CD14-positive monocyte (primary cell): ENCODE measurements at regions of chr3 and their contacts with region 1.

Region 1: DNA sequence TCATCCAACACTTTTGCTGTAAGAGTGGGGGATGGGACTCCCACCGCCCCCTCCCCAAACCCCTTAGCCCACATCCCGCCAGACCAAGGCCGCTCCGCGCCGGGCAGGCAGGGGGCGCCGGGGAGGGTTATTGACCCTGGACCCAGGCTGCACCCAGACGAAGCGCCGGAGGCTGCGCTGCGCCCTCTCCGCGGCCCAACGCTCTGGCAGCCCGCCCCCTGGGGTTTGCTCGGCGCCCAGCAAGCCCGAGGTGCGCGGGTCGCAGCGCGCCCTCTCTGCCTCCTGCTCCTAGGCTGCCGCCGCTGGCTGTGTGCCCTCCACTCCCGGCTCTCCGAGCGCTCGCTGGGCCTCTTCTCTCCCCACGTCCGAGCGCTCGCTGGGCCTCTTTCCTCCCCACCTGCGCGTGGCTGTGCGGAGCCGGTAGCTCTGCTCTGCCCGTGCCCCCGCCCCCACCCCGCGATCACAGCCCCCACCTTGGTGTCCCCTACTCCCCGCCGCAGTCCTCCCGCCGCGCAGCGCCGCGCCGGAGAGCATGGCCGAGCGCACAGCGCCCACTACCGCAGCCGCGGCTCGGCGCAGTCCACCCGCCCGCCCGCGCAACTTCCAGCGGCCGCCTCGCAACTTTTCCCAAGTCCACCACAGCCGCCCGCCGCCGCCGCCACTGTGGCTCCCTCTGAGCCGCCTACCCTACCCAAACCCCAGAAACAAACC is 1.2 kb downstream of the MECOM start:
- DNase-seq: peak in 2 of 3 donors; percentile 30 to 46
- H3K4me3 ChIP-seq: peak overlapping the region; percentile 24 to 77 (median 36)
- H3K4me3 Mint-ChIP-seq: peak overlapping the region; percentile 91 to 94
- H3K27ac ChIP-seq: no peak overlapping the region
- H3K27ac Mint-ChIP-seq: no peak overlapping the region
- H3K4me1 ChIP-seq: peaks cover 31 to 39% of the 10 kb centered on the region in 2 donors
- H3K4me1 Mint-ChIP-seq: peaks cover 56% of the 10 kb centered on the region
- H3K27me3 ChIP-seq: peaks cover 91 to 94% of the 10 kb centered on the region in 2 donors
- H3K27me3 Mint-ChIP-seq: peaks cover 94 to 97% (median 95%) of the 10 kb centered on the region in 3 donors
- CTCF ChIP-seq: peak; percentile 66

Region 2: GRCh38 chr3:168864107-168865021 is 797.9 kb before region 1 on chr3:
- intact Hi-C with region 1: loop called in 1 of 2 experiments (anchors 5 kb)
- DNase-seq: no peak
- H3K4me3 ChIP-seq: no peak overlapping the region
- H3K4me3 Mint-ChIP-seq: no peak overlapping the region
- H3K27ac ChIP-seq: no peak overlapping the region
- H3K27ac Mint-ChIP-seq: no peak overlapping the region
- H3K4me1 ChIP-seq: no peaks in the 10 kb centered on the region
- H3K4me1 Mint-ChIP-seq: peaks cover 4% of the 10 kb centered on the region
- H3K27me3 ChIP-seq: no peaks in the 10 kb centered on the region
- H3K27me3 Mint-ChIP-seq: no peaks in the 10 kb centered on the region
- CTCF ChIP-seq: no peak

Region 3: DNA sequence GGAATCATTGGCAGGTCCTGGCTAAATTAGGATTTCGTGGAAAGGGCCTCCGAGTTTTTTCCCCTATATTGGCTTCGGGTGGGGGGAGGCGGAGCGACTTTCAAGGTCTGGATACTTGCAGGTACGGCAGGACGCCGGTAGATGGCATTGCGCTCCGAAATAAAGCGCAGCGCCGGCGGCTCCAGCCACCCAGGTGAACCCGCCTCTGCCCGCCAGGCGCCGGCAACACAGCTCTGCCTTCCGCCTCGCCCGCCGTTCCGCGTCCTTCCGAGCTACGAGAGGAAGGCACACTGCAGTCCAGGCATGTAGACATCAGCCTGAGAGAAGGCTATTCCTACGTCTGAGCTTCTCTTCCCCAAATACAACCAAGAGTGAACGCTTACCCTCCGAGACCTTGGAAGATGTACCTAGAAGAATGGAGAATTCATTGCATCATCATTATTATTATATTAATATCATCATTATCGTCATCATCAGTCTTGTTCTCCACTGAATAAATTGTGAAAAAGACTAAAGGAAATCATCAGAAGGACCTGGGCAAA is 512.9 kb before region 1 on chr3:
- intact Hi-C with region 1: loop called (anchors 5 kb)
- DNase-seq: peak; percentile 37 to 59 (median 55)
- H3K4me3 ChIP-seq: no peak overlapping the region
- H3K4me3 Mint-ChIP-seq: peak overlapping the region; percentile 31 to 87
- H3K27ac ChIP-seq: no peak overlapping the region
- H3K27ac Mint-ChIP-seq: no peak overlapping the region
- H3K4me1 ChIP-seq: peaks cover 37 to 38% of the 10 kb centered on the region in 2 donors
- H3K4me1 Mint-ChIP-seq: peaks cover 44% of the 10 kb centered on the region
- H3K27me3 ChIP-seq: peaks cover 59 to 64% of the 10 kb centered on the region in 2 donors
- H3K27me3 Mint-ChIP-seq: peaks cover 60 to 68% (median 64%) of the 10 kb centered on the region in 3 donors
- CTCF ChIP-seq: peak; percentile 83